PC-3 (cell line): ENCODE measurements at regions of chr1 and their contacts with region 1.

Region 1: DNA sequence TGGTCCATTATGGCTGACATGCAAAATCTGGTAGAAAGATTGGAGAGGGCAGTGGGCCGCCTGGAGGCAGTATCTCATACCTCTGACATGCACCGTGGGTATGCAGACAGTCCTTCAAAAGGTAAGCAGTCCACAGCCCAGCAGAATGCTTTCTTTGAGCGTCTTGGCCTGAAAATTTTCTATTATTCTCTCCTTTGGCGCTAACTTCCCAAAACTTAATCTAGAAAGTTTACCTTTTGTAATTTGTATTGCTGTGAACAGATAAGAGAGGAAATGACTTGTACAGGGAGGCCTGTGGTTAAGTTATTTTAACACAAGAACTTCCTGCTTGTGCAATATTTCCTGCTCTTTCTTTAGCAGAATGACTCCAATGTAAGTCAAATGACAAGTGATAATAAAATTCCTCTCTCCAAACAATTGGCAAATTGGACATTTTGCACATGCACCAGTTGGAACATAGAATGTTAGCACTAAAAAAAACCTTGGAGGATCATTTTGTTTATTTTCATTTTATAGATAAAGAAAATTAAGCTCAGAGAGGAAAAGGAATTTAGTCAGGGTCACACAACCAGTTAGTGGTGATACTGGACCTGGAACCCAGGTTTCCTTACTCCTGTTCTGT is 18.9 kb downstream of the CAP1 start:
- DNase-seq: peak; percentile 76
- ATAC-seq: peak; percentile 88
- H3K4me3 ChIP-seq: 0 out of 2 replicates have a peak overlapping the region, but pooled peaks have one; percentile 20
- H3K27ac ChIP-seq: peak overlapping the region; percentile 66
- H3K4me1 ChIP-seq: peaks cover 28% of the 10 kb centered on the region
- H3K27me3 ChIP-seq: no peaks in the 10 kb centered on the region
- CTCF ChIP-seq: no peak

Region 2: GRCh38 chr1:40040511-40041465 is 18.7 kb before region 1 on chr1 and contains the start of gene CAP1:
- CTCF ChIA-PET with region 1: interaction called, 3 read pairs
- POLR2A ChIA-PET with region 1: no interaction called
- intact Hi-C with region 1: loop called (anchors 2 kb)
- DNase-seq: peak; percentile 99
- ATAC-seq: peak; percentile 90
- H3K4me3 ChIP-seq: peak within 1 kb of the TSS; percentile 99
- H3K27ac ChIP-seq: peak within 1 kb of the TSS; percentile 87
- H3K4me1 ChIP-seq: peaks cover 34% of the 10 kb centered on the region
- H3K27me3 ChIP-seq: no peaks in the 10 kb centered on the region
- CTCF ChIP-seq: no peak
- total RNA-seq, gene CAP1: 214 and 243 TPM in 2 replicates

Region 3: DNA sequence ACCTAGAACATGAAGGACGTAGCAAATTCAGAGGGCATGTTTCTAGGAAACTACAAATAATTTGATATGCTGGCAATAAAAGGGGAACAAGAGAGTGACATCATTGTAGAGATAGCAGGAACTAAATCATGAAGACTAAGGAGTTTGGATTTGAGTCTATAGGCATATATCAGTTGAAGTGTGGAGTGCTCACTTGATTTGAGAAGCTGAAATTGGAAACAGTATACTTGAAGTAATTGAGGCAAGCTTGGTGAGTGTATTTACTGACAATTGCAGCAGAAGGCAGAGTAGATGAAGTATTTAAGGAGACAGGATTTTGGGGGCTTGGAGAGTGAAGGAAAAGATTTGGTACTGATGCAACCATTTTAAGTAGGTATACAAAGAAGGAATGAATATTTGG is 181.9 kb after region 1 on chr1:
- CTCF ChIA-PET with region 1: no interaction called
- POLR2A ChIA-PET with region 1: no interaction called
- intact Hi-C with region 1: loop called (anchors 10 kb)
- DNase-seq: no peak
- ATAC-seq: peak; percentile 4
- H3K4me3 ChIP-seq: no peak overlapping the region
- H3K27ac ChIP-seq: peak overlapping the region; percentile 43
- H3K4me1 ChIP-seq: peaks cover 42% of the 10 kb centered on the region
- H3K27me3 ChIP-seq: no peaks in the 10 kb centered on the region
- CTCF ChIP-seq: no peak